ENCODE measurements at regions of chr1 and their contacts with region 1.

Region 1: GRCh38 chr1:19582302-19582701 is 61.8 kb upstream of the NBL1 start:
- DNase-seq: peak; percentile 31
- H3K4me3 ChIP-seq: no peak overlapping the region
- H3K27ac ChIP-seq: no peak overlapping the region
- H3K4me1 ChIP-seq: no peaks in the 10 kb centered on the region
- H3K27me3 ChIP-seq: no peaks in the 10 kb centered on the region
- CTCF ChIP-seq: peak; percentile 77

Region 2: DNA sequence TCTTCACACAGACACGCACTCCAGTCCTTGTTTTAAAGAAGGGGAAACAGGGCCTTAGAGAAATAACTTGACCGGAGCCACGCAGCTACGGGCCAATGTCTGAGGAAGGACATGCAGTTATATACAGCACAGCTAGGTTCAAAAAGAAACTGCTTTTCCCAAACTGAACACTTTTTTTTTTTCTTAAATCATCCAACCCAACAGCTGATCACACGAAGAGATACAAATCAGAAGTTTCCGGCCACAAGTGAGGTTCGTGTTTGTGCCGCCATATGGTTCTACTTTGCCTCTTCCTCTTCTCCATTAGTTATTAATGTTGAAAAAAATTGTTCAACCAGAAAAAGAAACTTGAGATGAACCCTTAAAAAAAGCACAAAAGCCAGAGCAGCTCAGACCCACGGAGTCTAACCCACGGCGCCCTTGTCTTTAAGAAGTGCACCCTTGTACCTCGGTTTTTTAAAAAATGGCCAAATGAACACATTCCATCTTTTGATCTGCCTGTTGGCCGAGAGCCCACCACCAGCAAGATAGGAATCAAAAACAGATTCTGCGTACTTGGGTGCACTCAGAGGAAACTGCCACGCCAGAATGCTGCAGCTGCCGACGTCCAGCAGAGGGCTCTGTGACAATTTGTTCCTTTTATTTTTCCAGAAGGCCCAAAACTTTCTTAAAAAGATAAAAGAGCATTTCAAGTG is 191.3 kb before region 1 on chr1:
- CTCF ChIA-PET with region 1: interaction called, 3 read pairs
- POLR2A ChIA-PET with region 1: no interaction called
- intact Hi-C with region 1: loop called (anchors 2 kb)
- DNase-seq: peak; percentile 81
- H3K4me3 ChIP-seq: peak overlapping the region; percentile 13
- H3K27ac ChIP-seq: peak overlapping the region; percentile 34
- H3K4me1 ChIP-seq: peaks cover 20% of the 10 kb centered on the region
- H3K27me3 ChIP-seq: no peaks in the 10 kb centered on the region
- CTCF ChIP-seq: peak; percentile 98

Region 3: DNA sequence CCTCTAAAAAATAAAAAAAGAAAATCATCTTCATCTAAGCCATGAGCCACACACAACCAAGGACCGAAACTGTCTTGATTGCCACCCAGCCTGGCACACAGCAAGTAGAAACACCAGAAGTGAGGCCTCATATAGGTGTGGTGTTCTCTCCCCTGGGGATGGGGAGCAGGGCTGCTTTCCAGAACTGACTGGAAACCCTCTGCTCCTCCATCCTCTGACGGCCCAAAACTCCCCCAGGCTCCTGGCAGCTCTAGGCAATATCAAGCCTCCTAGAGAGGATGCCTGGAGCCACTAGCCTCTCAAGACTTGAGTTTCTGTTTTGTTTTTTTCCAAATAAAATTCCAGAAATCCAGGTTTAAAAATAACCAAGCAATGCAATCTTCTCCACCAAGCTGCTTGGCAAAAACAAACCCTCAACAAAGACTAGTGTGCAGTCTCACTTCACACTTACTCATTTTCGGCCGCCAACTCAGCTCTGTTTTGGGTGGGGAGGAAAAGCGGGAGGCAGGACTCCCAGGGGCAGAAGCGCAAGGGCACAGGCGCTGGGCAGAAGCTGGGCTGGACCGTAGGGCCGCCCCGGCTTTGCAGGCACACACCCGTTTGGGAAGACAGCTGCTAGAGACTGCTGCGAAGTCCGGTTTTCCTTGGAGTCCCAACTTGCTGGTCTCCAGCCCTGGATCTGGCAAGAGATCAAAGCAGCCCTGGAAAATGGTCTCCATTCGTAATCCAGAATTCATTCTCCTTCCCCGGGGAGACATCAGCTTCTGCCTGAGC is 18.8 kb before region 1 on chr1:
- CTCF ChIA-PET with region 1: interaction called, 11 read pairs
- POLR2A ChIA-PET with region 1: no interaction called
- intact Hi-C with region 1: no loop called
- DNase-seq: no peak
- H3K4me3 ChIP-seq: no peak overlapping the region
- H3K27ac ChIP-seq: no peak overlapping the region
- H3K4me1 ChIP-seq: no peaks in the 10 kb centered on the region
- H3K27me3 ChIP-seq: no peaks in the 10 kb centered on the region
- CTCF ChIP-seq: no peak

Region 4: GRCh38 chr1:19643602-19644394 is 61.5 kb after region 1 on chr1 and contains the start of gene NBL1:
- CTCF ChIA-PET with region 1: no interaction called
- POLR2A ChIA-PET with region 1: no interaction called
- intact Hi-C with region 1: no loop called
- DNase-seq: peak; percentile 76
- H3K4me3 ChIP-seq: peak within 1 kb of the TSS; percentile 66
- H3K27ac ChIP-seq: peak within 1 kb of the TSS; percentile 44
- H3K4me1 ChIP-seq: peaks cover 13% of the 10 kb centered on the region
- H3K27me3 ChIP-seq: no peaks in the 10 kb centered on the region
- CTCF ChIP-seq: no peak
- total RNA-seq, gene NBL1: 7.9 and 12.5 TPM in 2 replicates